Activated CD4-positive, alpha-beta T cell treated with anti-CD3 and anti-CD28 coated beads for 36 hours (primary cell): ENCODE measurements at regions of chr19 and their contacts with region 1.

Region 1: DNA sequence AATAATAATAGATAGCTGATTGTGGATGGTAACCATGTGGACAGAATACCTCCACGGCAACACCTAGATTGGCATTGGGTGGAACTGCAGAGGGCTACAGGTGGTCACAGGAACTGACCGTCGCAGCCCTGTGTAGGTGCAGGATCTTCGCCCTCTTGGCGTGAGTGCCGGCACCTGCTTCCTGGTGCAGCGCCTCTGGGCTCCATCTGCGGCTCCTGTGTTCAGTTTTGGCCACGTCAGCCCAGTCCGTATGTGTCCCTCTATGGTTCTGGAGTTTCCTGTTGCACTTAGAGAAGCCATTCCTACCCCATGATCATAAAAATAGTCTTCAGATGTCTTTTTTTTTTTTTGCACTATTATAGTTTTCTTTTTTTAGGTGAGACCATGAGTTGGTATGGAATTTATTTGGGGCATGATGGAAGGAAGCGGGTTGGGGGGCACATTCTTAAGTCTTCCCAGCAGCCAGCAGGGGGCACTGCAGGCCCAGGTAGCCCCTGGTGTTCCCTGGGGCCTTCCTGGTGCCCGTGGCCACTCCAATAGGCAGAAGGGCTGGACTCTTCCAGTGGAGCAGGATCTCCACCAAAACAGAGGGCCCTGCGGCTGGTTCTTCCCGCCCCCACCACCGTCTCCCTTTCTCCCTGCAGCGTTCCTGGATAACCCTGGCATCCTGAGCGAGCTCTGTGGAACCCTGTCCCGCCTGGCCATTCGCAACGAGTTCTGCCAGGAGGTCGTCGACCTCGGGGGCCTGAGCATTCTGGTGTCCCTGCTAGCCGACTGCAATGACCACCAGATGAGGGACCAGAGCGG is 10.1 kb upstream of the SLC25A42 start:
- DNase-seq: peak; percentile 77
- ATAC-seq: peak; percentile 69
- H3K4me3 Mint-ChIP-seq: no peak overlapping the region
- H3K27ac Mint-ChIP-seq: no peak overlapping the region
- H3K4me1 Mint-ChIP-seq: peaks cover 2% of the 10 kb centered on the region
- H3K27me3 Mint-ChIP-seq: no peaks in the 10 kb centered on the region

Region 2: GRCh38 chr19:18551637-18552036 is 502.1 kb before region 1 on chr19:
- CTCF ChIA-PET with region 1: no interaction called
- POLR2A ChIA-PET with region 1: no interaction called
- intact Hi-C with region 1: no loop called
- DNase-seq: no peak
- ATAC-seq: no peak
- H3K4me3 Mint-ChIP-seq: no peak overlapping the region
- H3K27ac Mint-ChIP-seq: no peak overlapping the region
- H3K4me1 Mint-ChIP-seq: no peaks in the 10 kb centered on the region
- H3K27me3 Mint-ChIP-seq: no peaks in the 10 kb centered on the region

Region 3: GRCh38 chr19:19110410-19111135 is 56.9 kb after region 1 on chr19:
- CTCF ChIA-PET with region 1: interaction called, 7 read pairs
- POLR2A ChIA-PET with region 1: no interaction called
- intact Hi-C with region 1: loop called in 1 of 2 experiments (anchors 5 kb)
- DNase-seq: peak; percentile 59
- ATAC-seq: peak; percentile 78
- H3K4me3 Mint-ChIP-seq: no peak overlapping the region
- H3K27ac Mint-ChIP-seq: no peak overlapping the region
- H3K4me1 Mint-ChIP-seq: peaks cover 2% of the 10 kb centered on the region
- H3K27me3 Mint-ChIP-seq: no peaks in the 10 kb centered on the region

Region 4: DNA sequence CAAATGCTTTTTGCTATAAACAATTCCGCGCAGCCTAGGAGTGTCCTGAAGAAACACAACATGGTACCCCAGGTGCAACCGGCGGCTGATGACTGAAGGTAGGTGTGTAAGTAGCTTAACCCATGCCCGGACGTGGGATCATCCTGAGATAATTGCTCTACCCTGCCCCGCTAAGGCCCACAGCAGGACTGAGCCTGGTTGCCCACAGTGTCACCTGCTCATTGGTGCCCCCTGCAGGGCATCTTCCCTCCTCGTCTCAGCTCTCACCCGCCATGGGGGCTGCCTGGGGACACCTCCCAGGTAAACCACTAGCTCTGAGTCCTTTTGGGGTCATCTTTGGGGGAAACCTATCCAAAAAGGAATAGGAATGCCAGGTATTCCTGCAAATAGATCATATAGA is 62.2 kb after region 1 on chr19:
- CTCF ChIA-PET with region 1: interaction called, 7 read pairs
- POLR2A ChIA-PET with region 1: no interaction called
- intact Hi-C with region 1: loop called (anchors 1 to 5 kb)
- DNase-seq: peak; percentile 77
- ATAC-seq: peak; percentile 37
- H3K4me3 Mint-ChIP-seq: no peak overlapping the region
- H3K27ac Mint-ChIP-seq: no peak overlapping the region
- H3K4me1 Mint-ChIP-seq: no peaks in the 10 kb centered on the region
- H3K27me3 Mint-ChIP-seq: no peaks in the 10 kb centered on the region

Region 5: GRCh38 chr19:19849056-19849455 is 795.3 kb after region 1 on chr19:
- CTCF ChIA-PET with region 1: no interaction called
- POLR2A ChIA-PET with region 1: no interaction called
- intact Hi-C with region 1: no loop called
- DNase-seq: no peak
- ATAC-seq: no peak
- H3K4me3 Mint-ChIP-seq: no peak overlapping the region
- H3K27ac Mint-ChIP-seq: no peak overlapping the region
- H3K4me1 Mint-ChIP-seq: no peaks in the 10 kb centered on the region
- H3K27me3 Mint-ChIP-seq: no peaks in the 10 kb centered on the region